SK-MEL-5 (cell line): ENCODE measurements at regions of chr17 and their contacts with region 1.

Region 1: DNA sequence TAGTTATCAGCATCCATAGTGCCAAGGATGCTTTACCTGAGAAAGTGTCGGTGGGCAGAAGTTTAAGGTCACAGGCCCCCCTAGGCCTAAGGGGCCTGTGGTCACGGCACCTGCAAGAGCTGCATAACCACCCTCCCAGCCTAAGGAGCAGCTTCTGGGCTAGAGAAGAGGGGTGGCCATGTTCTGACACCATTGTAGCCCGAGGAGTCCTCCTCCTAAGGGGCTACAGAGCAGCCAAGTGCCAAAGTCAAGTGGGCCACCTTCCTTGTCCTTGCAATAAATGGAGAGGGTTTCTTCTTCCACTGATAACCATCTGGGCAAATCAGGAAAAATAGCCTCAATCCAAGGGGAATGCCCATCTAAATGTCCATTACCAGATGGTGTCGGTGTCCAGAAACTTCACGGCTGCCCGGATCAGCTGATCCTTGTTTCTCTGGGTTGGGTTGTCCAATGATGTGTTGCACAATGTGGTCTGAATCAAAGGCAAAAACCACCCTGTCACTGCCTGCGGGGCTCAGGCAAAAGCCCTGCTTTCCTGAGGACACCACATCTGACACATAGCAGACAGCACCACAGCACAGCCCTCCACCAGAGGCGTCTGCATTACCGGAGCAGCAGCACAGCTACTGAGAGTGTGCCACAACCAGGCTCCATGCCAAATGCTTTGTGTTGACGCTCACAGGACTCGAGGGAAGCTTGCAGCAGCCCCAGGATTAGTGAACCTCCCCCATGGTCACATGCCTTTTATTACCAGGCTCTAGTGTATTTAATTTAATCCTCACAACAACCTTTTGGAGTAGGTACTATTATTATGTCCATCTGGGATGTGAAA is 12.8 kb downstream of the ATPAF2 start:
- DNase-seq: peak; percentile 73

Region 2: DNA sequence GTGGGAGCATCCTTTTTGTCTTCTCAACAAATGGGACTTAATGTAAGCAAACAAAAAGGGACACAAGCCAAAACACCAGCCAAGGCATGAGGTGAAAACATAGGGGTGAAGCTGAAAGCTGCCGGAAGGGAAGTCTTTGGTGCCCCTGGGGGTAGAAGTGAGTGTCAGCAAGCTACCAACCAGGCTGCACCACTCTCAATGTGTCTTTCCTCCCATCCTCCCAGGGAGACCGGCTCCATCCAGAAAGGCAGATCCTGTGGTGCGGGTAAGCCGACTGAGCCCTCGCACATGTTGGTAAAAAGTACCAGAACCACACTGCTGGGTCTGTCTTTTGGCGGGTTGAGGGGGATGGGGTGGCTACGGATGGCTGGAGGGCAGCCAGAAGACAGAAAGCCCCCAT is 137.3 kb before region 1 on chr17:
- in situ Hi-C with region 1: loop called (anchors 10 kb)
- DNase-seq: no peak